ENCODE measurements at regions of chr13 and their contacts with region 1.

Region 1: DNA sequence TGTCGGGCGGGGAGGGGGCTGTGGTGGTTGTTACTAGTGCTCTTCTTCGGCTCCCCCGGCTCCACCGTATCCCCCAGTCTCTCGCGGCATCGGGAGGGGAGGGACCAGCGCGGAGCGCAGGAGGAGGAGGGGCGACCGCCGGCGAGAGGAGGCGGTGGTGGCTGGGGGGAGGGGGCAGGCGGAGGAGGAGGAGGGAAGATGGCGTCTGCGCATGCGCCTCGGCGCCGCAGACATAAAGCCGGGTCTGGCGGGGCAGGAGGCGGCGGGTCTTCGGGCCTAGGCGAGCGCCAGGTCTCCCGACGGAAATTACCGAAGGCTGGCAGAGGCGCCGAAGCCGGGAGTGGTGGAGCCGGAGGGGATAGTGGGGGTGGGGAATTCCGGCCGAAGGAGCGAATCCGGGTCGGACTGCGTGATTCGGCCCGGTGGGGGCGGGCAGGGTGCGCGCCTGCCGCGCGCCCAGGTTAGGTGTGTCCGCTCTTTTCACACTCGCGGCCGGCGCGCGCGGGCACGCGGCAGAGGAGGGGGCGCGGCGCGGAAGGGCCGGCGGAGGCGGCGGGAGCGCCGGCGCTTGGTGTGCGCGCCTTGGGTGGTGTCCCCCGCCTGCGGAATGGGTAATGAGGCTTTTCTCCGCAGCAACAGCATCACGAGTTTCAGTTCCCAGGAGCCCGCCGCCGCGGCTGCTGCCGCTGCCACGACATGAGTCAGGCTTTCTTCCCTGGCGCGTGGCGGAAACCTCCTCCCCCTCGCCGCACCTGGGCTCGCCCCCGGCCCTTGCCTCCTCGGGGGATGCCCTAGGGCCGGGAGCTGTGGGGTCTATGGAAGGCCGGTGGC is 1.3 kb upstream of the TSC22D1 start:
- DNase-seq: peak; percentile 91
- ATAC-seq: peak; percentile 72
- H3K4me3 Mint-ChIP-seq: peak overlapping the region; percentile 93
- H3K27ac Mint-ChIP-seq: peak overlapping the region; percentile 90
- H3K4me1 Mint-ChIP-seq: peaks cover 23% of the 10 kb centered on the region
- H3K27me3 Mint-ChIP-seq: no peaks in the 10 kb centered on the region
- CTCF ChIP-seq: no peak

Region 2: DNA sequence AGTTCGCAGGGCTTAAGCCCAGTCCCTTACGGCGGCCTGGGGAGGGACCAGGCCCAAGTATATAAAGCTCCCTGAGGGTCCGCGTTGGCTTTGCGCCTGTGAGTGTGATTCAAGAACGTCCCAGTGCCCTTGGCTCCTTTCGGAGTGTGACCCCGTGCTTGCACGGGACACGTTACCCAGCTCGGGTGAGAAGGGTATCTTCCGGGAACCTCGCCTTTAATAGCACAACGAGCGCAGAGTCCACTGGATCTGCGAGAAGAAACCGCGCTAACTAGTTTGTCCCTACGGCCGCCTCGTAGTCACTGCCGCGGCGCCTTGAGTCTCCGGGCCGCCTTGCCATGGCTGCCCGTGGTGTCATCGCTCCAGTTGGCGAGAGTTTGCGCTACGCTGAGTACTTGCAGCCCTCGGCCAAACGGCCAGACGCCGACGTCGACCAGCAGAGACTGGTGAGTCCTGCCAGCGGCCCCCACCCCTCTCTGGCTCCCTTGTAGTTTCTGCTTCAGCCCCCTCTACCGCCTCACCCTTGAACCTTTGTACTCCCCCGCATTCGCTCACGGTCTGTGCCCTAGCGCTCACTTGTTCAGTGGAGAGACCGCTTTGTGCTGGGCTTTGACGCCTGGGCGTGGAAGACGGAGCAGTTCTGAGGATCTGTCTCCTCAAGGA is 1554.0 kb before region 1 on chr13 and contains the start of gene DNAJC15:
- CTCF ChIA-PET with region 1: no interaction called
- POLR2A ChIA-PET with region 1: no interaction called
- intact Hi-C with region 1: loop called (anchors 10 kb)
- DNase-seq: peak; percentile 81
- ATAC-seq: peak; percentile 85
- H3K4me3 Mint-ChIP-seq: peak within 1 kb of the TSS; percentile 94
- H3K27ac Mint-ChIP-seq: peak within 1 kb of the TSS; percentile 97
- H3K4me1 Mint-ChIP-seq: peaks cover 47% of the 10 kb centered on the region
- H3K27me3 Mint-ChIP-seq: no peaks in the 10 kb centered on the region
- CTCF ChIP-seq: no peak
- total RNA-seq, gene DNAJC15: 19.1 and 19.3 TPM in 2 replicates

Region 3: DNA sequence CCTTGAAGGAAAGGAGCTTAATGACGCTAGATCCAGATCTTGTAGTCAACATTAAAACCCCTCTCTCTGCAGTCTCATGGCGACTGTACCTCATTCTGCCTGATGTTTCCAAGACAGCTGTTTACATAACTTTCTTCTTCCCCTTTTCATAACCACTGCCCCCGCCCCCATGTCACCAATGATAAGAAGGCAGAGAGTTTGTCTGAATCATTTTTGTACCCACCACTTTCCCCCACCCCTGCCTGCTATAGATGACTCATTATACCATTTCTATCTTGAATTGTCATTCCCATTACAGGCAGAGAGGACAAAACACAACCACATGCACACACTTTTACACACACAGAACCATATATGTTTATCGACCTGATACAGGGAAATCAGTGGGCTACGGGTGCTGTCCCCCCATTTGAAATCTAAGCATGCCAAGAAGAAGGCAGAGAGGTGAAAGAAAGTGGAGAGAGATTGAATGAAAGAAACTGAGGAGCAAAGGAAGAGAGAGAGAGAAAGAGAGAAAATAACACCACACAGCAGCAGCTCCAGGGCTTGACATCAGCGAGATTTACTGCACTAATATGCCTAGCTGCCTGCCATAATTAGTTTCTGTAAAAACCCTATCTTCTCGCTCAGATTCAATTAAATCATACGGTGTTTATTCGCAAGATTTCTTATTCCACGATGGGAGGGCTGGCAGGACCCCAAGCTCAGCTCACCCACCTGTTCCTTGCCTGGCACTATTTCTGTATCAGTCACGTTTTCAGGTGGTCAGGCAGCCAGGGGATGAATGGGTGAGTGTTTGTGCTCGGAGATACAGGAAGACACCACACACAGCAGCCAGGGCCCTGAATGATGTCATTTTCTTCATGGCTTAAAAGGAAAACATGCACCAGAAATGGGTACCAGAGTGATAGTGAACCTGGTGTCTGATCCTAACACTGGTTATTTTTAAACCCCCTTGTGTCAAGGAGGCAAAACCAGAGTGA is 318.1 kb before region 1 on chr13:
- CTCF ChIA-PET with region 1: no interaction called
- POLR2A ChIA-PET with region 1: no interaction called
- intact Hi-C with region 1: loop called (anchors 2 kb)
- DNase-seq: peak; percentile 36
- ATAC-seq: peak; percentile 92
- H3K4me3 Mint-ChIP-seq: peak overlapping the region; percentile 74
- H3K27ac Mint-ChIP-seq: peak overlapping the region; percentile 80
- H3K4me1 Mint-ChIP-seq: peaks cover 19% of the 10 kb centered on the region
- H3K27me3 Mint-ChIP-seq: no peaks in the 10 kb centered on the region
- CTCF ChIP-seq: no peak

Region 4: DNA sequence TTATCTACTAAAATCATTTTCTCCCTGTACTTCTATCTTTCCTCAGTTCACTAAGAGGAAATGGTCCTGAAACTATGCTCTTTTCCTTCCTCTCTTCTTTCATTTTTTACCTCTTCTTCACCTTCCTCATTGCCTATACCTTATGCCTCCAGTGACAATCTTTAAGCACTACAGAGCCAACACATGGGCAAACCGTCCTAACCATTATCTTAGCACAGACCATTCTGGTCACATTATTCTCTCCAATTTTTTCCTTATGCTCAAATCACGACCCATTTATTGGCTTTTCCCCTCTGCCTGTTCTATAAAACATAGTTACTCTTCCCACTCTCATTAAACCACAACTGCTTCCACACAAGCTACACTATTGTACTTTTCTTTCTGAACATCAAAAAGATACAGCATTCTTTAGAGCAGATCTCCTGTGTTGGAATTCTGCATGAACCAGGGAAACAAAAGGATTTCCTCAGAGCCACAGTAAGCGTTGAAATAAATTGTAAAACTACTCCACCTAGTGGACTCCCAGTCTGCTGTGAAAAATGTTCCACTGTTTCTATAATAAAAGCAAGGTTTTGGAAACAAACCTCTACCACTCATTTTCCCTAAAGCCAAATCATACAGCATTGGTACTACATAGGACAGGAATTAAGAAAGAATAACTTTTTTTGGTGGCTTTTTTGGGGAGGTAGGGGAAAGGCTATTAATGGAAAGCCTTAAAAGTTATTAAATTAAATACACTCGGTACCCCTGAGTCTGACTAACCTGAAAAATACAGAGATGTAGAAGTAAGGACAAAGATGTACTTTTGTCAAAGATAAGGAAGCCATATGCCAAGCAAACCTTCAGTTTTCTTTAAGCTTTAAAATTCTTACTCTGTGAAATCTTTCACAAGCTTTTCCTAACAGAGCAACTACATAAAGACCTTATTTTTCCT is 392.4 kb after region 1 on chr13:
- CTCF ChIA-PET with region 1: no interaction called
- POLR2A ChIA-PET with region 1: no interaction called
- intact Hi-C with region 1: loop called (anchors 5 kb)
- DNase-seq: no peak
- ATAC-seq: no peak
- H3K4me3 Mint-ChIP-seq: no peak overlapping the region
- H3K27ac Mint-ChIP-seq: no peak overlapping the region
- H3K4me1 Mint-ChIP-seq: no peaks in the 10 kb centered on the region
- H3K27me3 Mint-ChIP-seq: no peaks in the 10 kb centered on the region
- CTCF ChIP-seq: no peak

Region 5: GRCh38 chr13:45340926-45341750 is 763.7 kb after region 1 on chr13 and contains the start of gene TPT1:
- CTCF ChIA-PET with region 1: no interaction called
- POLR2A ChIA-PET with region 1: no interaction called
- intact Hi-C with region 1: loop called (anchors 1 kb)
- DNase-seq: peak; percentile 99
- ATAC-seq: peak; percentile 89
- H3K4me3 Mint-ChIP-seq: peak within 1 kb of the TSS; percentile 99
- H3K27ac Mint-ChIP-seq: peak within 1 kb of the TSS; percentile 99
- H3K4me1 Mint-ChIP-seq: peaks cover 56% of the 10 kb centered on the region
- H3K27me3 Mint-ChIP-seq: no peaks in the 10 kb centered on the region
- CTCF ChIP-seq: no peak
- total RNA-seq, gene TPT1: 3,880 and 4,323 TPM in 2 replicates

Region 6: DNA sequence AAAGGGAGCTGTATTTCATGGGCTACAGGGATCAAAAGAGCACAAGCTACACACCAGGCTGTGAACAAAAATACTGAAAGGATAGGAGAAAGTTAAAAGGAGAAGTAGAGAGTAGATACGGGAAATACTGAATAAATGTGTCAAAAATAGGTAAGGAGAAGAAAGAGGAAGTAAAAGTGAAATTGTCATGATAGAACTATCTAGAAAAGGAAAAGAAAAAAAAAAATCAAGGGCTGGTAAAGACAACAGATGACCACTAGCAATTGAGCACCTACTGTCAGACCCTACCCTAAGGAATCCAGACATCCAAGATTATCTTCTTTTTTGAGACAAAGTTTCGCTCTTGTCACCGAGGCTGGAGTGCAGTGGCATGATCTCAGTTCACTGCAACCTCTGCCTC is 1804.8 kb after region 1 on chr13:
- CTCF ChIA-PET with region 1: no interaction called
- POLR2A ChIA-PET with region 1: no interaction called
- intact Hi-C with region 1: loop called (anchors 5 kb)
- DNase-seq: no peak
- ATAC-seq: peak; percentile 42
- H3K4me3 Mint-ChIP-seq: peak overlapping the region; percentile 72
- H3K27ac Mint-ChIP-seq: peak overlapping the region; percentile 93
- H3K4me1 Mint-ChIP-seq: peaks cover 75% of the 10 kb centered on the region
- H3K27me3 Mint-ChIP-seq: no peaks in the 10 kb centered on the region
- CTCF ChIP-seq: no peak

Measured in activated B cell treated with CpG ODN at 0.5 μM for 24 hours (primary cell).